HEK293T (cell line): ENCODE measurements at regions of chr2 and their contacts with region 1.

Region 1: GRCh38 chr2:216519154-216519762 is 20.6 kb downstream of the RPL37A start:
- DNase-seq: peak; percentile 65

Region 2: DNA sequence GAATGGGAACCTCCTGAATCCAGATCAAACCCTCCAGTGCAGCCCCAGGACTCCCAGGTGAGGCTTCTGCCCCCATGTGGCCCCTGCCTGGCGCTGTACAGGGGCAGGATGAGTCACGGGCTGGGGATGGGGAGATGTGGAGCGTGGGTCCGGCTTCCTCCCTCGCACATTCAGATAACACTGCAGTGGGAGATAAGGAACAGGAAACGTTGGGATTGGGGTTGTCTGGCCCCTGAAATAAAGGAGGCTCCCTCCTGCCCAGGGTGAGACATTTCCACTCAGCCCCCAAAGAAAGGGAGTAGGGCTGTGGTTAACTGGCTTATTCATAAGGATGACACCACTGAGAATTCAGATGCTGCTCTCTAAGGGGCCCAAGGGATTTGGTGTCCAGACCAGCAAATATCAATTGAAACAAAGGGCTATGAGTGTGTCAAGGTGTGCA is 145.4 kb after region 1 on chr2:
- CTCF ChIA-PET with region 1: interaction called, 14 read pairs
- POLR2A ChIA-PET with region 1: no interaction called
- DNase-seq: no peak